Mammary epithelial cell (primary cell): ENCODE measurements at regions of chr19 and their contacts with region 1.

Region 1: GRCh38 chr19:2412449-2412848 is 14.9 kb downstream of the TIMM13 start:
- DNase-seq: no peak
- H3K4me3 ChIP-seq: no peak overlapping the region
- H3K27ac ChIP-seq: no peak overlapping the region
- H3K4me1 ChIP-seq: no peaks in the 10 kb centered on the region
- H3K27me3 ChIP-seq: no peaks in the 10 kb centered on the region
- CTCF ChIP-seq: no peak

Region 2: DNA sequence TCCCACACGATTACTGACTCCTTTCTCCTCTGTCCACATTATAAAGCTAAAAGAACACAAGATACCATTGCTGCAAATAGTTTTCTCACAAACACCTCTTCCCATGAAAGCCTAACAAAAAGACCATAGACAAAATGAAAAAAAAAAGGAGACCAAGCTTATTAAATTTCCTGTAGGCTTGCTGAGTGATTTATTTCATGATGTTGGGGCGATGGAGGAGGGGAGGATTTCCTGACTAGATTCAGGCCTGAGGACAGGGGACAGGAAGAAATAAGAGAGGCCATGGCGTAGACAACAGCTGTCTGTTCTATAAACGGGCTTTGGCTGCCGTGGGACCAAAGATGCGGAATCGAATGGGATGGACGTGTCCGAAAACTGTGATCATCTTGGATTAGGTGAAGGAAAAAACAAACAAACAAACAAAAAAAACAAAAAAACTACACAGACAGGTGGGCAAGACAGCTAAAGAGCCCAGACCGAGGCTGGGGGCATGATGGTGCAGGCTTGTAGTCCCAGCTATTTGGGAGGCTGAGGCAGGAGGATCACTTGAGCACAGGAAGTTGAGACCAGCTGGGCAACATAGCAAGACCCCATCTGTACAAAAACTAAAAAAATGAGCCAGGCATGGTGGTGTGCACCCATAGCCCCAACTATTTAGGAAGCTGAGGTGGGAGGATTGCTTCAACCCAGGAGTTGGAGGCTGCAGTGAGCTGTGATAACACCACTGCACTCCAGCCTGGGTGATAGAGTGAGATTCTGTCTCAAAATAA is 47.1 kb before region 1 on chr19:
- CTCF ChIA-PET with region 1: no interaction called
- dilution Hi-C with region 1: loop called (anchors 5 kb)
- in situ Hi-C with region 1: no loop called
- intact Hi-C with region 1: no loop called
- DNase-seq: no peak
- H3K4me3 ChIP-seq: no peak overlapping the region
- H3K27ac ChIP-seq: no peak overlapping the region
- H3K4me1 ChIP-seq: no peaks in the 10 kb centered on the region
- H3K27me3 ChIP-seq: peaks cover 6% of the 10 kb centered on the region
- CTCF ChIP-seq: no peak

Region 3: DNA sequence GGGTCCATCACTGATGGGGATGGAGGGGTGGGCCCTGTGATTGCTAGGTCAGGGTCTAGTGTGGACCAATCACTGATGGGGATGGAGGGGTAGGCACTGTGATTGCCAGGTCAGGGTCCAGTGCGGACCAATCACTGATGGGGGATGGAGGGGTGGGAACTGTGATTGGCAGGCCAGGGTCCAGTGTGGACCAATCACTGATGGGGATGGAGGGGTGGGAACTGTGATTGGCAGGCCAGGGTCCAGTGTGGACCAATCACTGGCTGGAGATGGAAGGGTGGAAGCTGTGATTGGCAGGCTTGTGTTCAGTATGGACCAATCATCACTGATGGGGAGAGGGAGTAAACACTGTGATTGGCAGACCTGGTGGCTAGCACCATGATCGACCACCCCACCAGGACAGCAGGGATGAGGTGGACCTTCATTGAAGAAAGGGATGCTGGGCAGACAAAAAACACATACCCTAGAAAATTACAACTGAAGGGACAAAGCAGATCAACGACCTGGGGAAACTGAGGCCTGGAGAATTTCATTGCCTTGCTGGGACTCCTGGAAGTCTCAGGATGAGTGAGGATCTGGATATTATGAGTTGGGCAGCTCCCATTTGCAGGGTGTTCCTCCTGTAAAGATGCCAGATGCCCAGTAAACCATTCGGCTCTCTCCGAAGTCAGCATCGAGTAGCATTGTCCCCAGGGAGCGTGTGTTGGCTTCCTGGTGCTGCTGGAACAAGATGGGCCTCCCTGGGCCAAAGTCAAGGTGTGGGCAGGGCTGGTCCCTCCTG is 36.9 kb before region 1 on chr19:
- CTCF ChIA-PET with region 1: no interaction called
- dilution Hi-C with region 1: no loop called
- in situ Hi-C with region 1: no loop called
- intact Hi-C with region 1: no loop called
- DNase-seq: no peak
- H3K4me3 ChIP-seq: no peak overlapping the region
- H3K27ac ChIP-seq: no peak overlapping the region
- H3K4me1 ChIP-seq: no peaks in the 10 kb centered on the region
- H3K27me3 ChIP-seq: no peaks in the 10 kb centered on the region
- CTCF ChIP-seq: no peak

Region 4: GRCh38 chr19:2494444-2495129 is 82.1 kb after region 1 on chr19:
- CTCF ChIA-PET with region 1: no interaction called
- dilution Hi-C with region 1: no loop called
- in situ Hi-C with region 1: no loop called
- intact Hi-C with region 1: no loop called
- DNase-seq: peak; percentile 43
- H3K4me3 ChIP-seq: peak overlapping the region; percentile 38 to 65 (median 51)
- H3K27ac ChIP-seq: peak overlapping the region; percentile 22
- H3K4me1 ChIP-seq: peaks cover 40% of the 10 kb centered on the region
- H3K27me3 ChIP-seq: no peaks in the 10 kb centered on the region
- CTCF ChIP-seq: no peak